IMR-90 (cell line): ENCODE measurements at regions of chr7 and their contacts with region 1.

Region 1: DNA sequence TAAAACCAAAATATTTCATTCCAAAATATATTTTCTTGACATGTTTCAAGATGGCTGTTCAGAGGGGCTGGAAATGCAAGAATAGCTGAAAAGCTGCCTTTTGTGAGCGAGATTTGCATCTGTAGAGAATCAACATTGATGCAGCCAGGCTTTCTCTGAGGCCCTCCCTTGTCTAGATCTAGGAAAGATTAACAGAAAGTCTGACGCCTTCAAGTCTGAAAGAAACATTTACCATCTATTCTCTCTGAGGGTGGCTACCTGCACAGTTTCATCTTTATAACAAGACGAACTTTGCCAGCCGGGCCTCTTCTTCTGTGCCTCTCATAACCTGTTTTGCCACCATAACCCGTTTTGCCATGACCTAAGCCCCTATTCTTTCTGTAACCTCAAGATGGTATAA is 170.2 kb downstream of the AKR1D1 start:
- DNase-seq: no peak
- ATAC-seq: no peak
- H3K4me3 ChIP-seq: no peak overlapping the region
- H3K27ac ChIP-seq: no peak overlapping the region
- H3K4me1 ChIP-seq: no peaks in the 10 kb centered on the region
- H3K27me3 ChIP-seq: no peaks in the 10 kb centered on the region
- CTCF ChIP-seq: no peak
- POLR2A ChIP-seq: no peak
- RAD21 ChIP-seq: no peak

Region 2: DNA sequence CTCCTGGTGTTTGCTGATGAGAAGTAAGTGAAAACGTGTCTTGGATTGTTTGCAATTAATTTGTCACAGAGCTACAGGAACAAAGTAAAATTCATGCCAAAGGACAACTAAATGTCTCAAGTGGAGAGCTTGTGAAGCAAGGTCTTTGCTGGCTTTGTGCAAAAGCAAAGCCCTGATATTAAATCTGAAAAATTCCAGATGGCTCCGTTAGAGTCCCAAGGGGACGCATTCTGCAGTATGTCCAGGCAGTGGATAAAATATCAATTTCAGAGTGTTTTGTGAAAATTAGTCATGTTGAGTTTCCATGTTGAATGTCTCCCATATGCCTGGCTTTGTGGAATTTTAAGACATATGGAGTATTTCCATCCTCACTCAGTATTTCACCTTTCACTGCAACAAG is 800.4 kb before region 1 on chr7:
- CTCF ChIA-PET with region 1: no interaction called
- POLR2A ChIA-PET with region 1: no interaction called
- dilution Hi-C with region 1: no loop called
- in situ Hi-C with region 1: no loop called
- intact Hi-C with region 1: no loop called
- DNase-seq: no peak
- ATAC-seq: no peak
- H3K4me3 ChIP-seq: no peak overlapping the region
- H3K27ac ChIP-seq: no peak overlapping the region
- H3K4me1 ChIP-seq: peaks cover 2% of the 10 kb centered on the region; the same call in 1 of the 2 replicates
- H3K27me3 ChIP-seq: no peaks in the 10 kb centered on the region
- CTCF ChIP-seq: no peak
- POLR2A ChIP-seq: no peak
- RAD21 ChIP-seq: no peak

Region 3: DNA sequence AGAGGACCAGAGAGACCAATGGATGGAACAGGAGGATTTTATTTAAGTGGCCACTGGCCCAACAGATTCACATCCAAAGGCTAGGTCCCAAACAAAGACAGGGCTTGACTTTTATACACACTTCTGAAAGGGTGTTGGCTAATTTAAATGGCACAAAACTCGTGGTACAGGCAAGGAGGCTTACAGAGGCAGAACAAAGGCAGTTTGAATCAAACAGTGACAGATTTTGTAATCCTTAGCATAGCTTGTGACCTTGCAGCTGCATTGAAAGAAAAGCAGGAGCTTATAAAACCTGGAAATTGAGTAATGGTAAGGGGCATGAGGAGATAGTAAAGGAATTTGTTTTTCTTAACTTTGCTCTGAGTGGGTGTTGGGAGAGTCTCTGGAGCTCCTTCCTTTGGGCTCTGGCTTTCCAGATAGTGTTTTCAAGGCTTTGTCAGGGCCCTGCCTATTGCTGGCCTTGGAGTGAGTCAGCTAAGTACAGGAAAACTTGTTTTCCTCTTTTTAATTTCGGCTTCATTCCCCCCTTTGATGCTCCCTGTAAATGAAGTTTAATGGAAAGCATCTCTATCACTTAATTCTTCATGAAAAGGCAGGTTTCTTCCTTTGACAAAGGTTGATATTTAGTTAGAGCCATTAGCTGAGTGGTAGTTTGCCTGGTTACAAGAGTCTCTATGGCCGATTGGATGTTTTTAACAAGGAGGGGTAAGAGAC is 310.5 kb after region 1 on chr7:
- CTCF ChIA-PET with region 1: no interaction called
- POLR2A ChIA-PET with region 1: no interaction called
- dilution Hi-C with region 1: no loop called
- in situ Hi-C with region 1: no loop called
- intact Hi-C with region 1: no loop called
- DNase-seq: no peak
- ATAC-seq: no peak
- H3K4me3 ChIP-seq: no peak overlapping the region
- H3K27ac ChIP-seq: no peak overlapping the region
- H3K4me1 ChIP-seq: no peaks in the 10 kb centered on the region
- H3K27me3 ChIP-seq: no peaks in the 10 kb centered on the region
- CTCF ChIP-seq: no peak
- POLR2A ChIP-seq: no peak
- RAD21 ChIP-seq: no peak

Region 4: GRCh38 chr7:138625084-138625848 is 378.8 kb after region 1 on chr7:
- CTCF ChIA-PET with region 1: no interaction called
- POLR2A ChIA-PET with region 1: interaction called, 10 read pairs
- dilution Hi-C with region 1: no loop called
- in situ Hi-C with region 1: no loop called
- intact Hi-C with region 1: no loop called
- DNase-seq: no peak
- ATAC-seq: no peak
- H3K4me3 ChIP-seq: no peak overlapping the region
- H3K27ac ChIP-seq: no peak overlapping the region
- H3K4me1 ChIP-seq: no peaks in the 10 kb centered on the region
- H3K27me3 ChIP-seq: no peaks in the 10 kb centered on the region
- CTCF ChIP-seq: no peak
- POLR2A ChIP-seq: no peak
- RAD21 ChIP-seq: no peak